CD4-positive, alpha-beta T cell (primary cell): ENCODE measurements at regions of chr17 and their contacts with region 1.

Region 1: GRCh38 chr17:28902819-28903545 is at the start of gene DHRS13:
- DNase-seq: peak; percentile 88 to 99 (median 95)
- ATAC-seq: peak; percentile 88
- H3K4me3 ChIP-seq: peak within 1 kb of the TSS; percentile 79
- H3K4me3 Mint-ChIP-seq: peak within 1 kb of the TSS; percentile 85
- H3K27ac ChIP-seq: peak within 1 kb of the TSS; percentile 71 to 76
- H3K27ac Mint-ChIP-seq: peak within 1 kb of the TSS; percentile 85
- H3K4me1 ChIP-seq: peaks cover 36% of the 10 kb centered on the region
- H3K4me1 Mint-ChIP-seq: peaks cover 35% of the 10 kb centered on the region
- H3K27me3 ChIP-seq: no peaks in the 10 kb centered on the region
- H3K27me3 Mint-ChIP-seq: no peaks in the 10 kb centered on the region
- CTCF ChIP-seq: peak; percentile 93
- total RNA-seq, gene DHRS13: 33.5 to 34.3 TPM

Region 2: DNA sequence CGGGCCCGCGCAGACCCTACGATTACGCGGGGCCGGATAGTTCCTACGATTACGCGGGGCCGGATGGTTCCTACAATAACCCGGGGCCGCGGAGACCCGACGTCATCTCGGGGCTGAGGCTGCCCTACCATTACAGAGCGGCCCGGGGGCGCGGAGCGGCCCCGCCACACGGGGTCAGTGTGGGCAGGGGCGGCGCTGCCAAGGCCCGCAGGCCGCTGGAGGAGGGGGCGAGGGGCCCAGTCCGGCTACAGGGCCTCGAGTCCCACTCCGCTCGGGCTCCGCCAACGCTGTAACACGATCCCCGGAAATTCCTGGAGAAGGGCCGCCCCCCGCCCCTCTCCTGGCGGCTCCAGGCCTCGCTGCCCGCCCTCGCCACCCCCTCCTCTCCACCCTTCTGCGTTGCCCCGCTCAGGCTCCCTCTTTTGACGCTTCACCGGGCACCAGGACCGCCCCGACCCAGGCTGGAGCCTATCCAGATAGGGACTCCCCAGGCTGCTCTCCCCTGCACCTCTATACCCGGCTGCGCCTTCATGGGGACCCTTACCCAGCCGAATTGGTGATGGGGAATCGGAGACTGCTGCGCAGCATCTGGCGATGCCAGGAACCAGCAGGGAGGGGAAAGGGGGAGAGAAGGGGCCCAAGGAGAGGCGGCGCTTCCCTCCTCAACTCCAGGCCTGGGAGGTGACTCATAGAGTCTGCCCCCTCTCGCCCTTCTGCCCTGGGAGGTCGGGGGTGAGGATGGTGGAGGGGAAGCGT is 185.2 kb before region 1 on chr17 and contains the start of gene RAB34:
- CTCF ChIA-PET with region 1: interaction called, 5 read pairs
- POLR2A ChIA-PET with region 1: interaction called, 9 read pairs
- intact Hi-C with region 1: loop called in 1 of 2 experiments (anchors 2 kb)
- DNase-seq: peak in 6 of 14 experiments; percentile 12 to 60 (median 43)
- ATAC-seq: no peak
- H3K4me3 ChIP-seq: peak within 1 kb of the TSS; percentile 36
- H3K4me3 Mint-ChIP-seq: peak within 1 kb of the TSS; percentile 79
- H3K27ac ChIP-seq: no peak within 1 kb of the TSS
- H3K27ac Mint-ChIP-seq: peak within 1 kb of the TSS; percentile 79
- H3K4me1 ChIP-seq: peaks cover 55% of the 10 kb centered on the region
- H3K4me1 Mint-ChIP-seq: peaks cover 41% of the 10 kb centered on the region
- H3K27me3 ChIP-seq: peaks cover 17 to 21% of the 10 kb centered on the region in 2 experiments
- H3K27me3 Mint-ChIP-seq: peaks cover 35% of the 10 kb centered on the region
- CTCF ChIP-seq: no peak
- total RNA-seq, gene RAB34: 20.7 to 21.3 TPM

Region 3: DNA sequence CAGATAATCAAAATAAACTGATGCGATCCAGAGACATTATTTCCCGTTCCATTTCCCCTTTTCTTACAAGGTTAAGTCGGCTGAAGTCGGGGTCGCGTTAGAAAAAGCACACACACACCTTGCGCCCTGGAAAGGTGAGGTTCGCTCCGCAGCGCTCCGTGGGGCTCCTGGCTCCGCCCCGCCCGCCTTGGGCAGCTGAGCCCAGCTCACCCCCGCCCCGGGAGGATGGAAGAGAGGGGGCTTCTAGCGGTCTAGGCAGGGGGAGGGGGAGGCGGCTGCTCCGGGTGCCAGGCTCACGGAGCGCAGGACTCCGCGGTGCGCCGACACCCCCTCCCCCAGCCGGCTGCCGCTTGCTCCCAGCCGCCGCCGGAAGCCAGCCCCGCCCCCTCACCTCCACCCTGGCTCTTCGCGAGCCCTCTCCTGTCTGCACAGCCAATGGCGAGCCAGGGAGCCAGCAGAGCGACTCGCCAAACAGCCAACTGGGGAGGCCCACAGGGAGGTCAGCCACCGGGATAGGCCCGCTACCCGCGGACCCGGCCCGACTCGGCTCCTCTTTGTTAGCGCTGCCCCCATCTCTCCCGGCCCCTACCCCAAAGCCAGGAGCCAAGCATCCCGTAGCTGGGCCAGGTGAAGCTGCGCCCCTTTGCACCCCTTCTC is 90.8 kb before region 1 on chr17:
- CTCF ChIA-PET with region 1: interaction called, 7 read pairs
- POLR2A ChIA-PET with region 1: interaction called, 5 read pairs
- intact Hi-C with region 1: loop called in 1 of 2 experiments (anchors 2 kb)
- DNase-seq: peak; percentile 91 to 98 (median 95)
- ATAC-seq: peak; percentile 95
- H3K4me3 ChIP-seq: peak overlapping the region; percentile 78
- H3K4me3 Mint-ChIP-seq: peak overlapping the region; percentile 92
- H3K27ac ChIP-seq: peak overlapping the region; percentile 91 to 93
- H3K27ac Mint-ChIP-seq: peak overlapping the region; percentile 90
- H3K4me1 ChIP-seq: peaks cover 15% of the 10 kb centered on the region
- H3K4me1 Mint-ChIP-seq: peaks cover 49% of the 10 kb centered on the region
- H3K27me3 ChIP-seq: no peaks in the 10 kb centered on the region
- H3K27me3 Mint-ChIP-seq: no peaks in the 10 kb centered on the region
- CTCF ChIP-seq: no peak

Region 4: DNA sequence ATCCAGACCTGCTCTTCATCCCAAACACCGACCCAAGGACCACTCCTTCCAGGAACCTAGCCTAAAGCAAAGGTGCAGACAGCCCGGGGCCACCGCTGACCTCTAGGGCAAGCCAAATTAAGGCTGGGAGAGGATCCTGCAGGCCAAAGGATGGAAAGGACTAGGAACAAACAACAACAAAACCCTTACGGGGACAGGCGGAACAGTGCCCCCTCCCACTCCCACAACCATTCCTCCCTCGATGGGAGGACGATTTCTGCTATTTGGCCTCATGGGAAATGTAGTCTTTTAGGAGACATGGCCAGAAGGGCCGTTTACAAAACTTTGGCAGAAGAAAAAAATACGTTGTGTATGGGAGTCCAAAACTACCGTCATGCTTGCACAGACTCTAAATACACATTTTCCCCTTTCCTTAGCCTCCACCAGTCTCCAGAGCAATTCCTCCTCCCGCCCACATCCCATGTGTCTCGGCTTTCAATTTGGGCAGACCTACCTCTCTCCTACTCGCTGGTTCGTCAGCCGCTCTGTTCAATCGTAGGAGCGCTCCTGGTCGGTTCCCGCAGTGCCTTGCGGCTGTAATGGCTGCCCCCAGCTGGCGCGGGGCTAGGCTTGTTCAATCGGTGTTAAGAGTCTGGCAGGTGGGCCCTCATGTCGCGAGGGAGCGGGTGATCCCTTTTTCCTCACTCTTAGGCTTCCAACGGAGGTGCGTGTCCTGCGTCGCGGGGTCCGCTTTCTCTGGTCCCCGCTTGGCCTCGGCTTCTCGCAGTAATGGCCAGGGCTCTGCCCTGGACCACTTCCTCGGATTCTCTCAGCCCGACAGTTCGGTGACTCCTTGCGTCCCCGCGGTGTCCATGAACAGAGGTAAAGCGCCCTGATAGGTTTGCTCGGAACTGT is 48.3 kb before region 1 on chr17 and contains the start of gene ERAL1:
- CTCF ChIA-PET with region 1: interaction called, 7 read pairs
- POLR2A ChIA-PET with region 1: interaction called, 6 read pairs
- intact Hi-C with region 1: loop called (anchors 2 kb)
- DNase-seq: peak; percentile 69 to 90 (median 76)
- ATAC-seq: peak; percentile 100
- H3K4me3 ChIP-seq: peak within 1 kb of the TSS; percentile 96
- H3K4me3 Mint-ChIP-seq: peak within 1 kb of the TSS; percentile 91
- H3K27ac ChIP-seq: peak within 1 kb of the TSS; percentile 70 to 72
- H3K27ac Mint-ChIP-seq: peak within 1 kb of the TSS; percentile 78
- H3K4me1 ChIP-seq: peaks cover 15% of the 10 kb centered on the region
- H3K4me1 Mint-ChIP-seq: peaks cover 18% of the 10 kb centered on the region
- H3K27me3 ChIP-seq: no peaks in the 10 kb centered on the region
- H3K27me3 Mint-ChIP-seq: no peaks in the 10 kb centered on the region
- CTCF ChIP-seq: no peak
- total RNA-seq, gene ERAL1: 15.6 to 16.8 TPM

Region 5: GRCh38 chr17:28892024-28892423 is 11.0 kb before region 1 on chr17:
- CTCF ChIA-PET with region 1: interaction called, 25 read pairs
- POLR2A ChIA-PET with region 1: interaction called, 14 read pairs
- intact Hi-C with region 1: no loop called
- DNase-seq: no peak
- ATAC-seq: no peak
- H3K4me3 ChIP-seq: no peak overlapping the region
- H3K4me3 Mint-ChIP-seq: peak overlapping the region; percentile 23
- H3K27ac ChIP-seq: peak overlapping the region in 1 of 2 donors; percentile 18
- H3K27ac Mint-ChIP-seq: peak overlapping the region; percentile 95
- H3K4me1 ChIP-seq: peaks cover 78% of the 10 kb centered on the region
- H3K4me1 Mint-ChIP-seq: peaks cover 50% of the 10 kb centered on the region
- H3K27me3 ChIP-seq: no peaks in the 10 kb centered on the region
- H3K27me3 Mint-ChIP-seq: no peaks in the 10 kb centered on the region
- CTCF ChIP-seq: no peak

Region 6: GRCh38 chr17:28916302-28916934 is 13.4 kb after region 1 on chr17:
- CTCF ChIA-PET with region 1: interaction called, 8 read pairs
- POLR2A ChIA-PET with region 1: interaction called, 4 read pairs
- intact Hi-C with region 1: loop called (anchors 1 kb)
- DNase-seq: peak in 12 of 14 experiments; percentile 22 to 72 (median 38)
- ATAC-seq: peak; percentile 86
- H3K4me3 ChIP-seq: no peak overlapping the region
- H3K4me3 Mint-ChIP-seq: no peak overlapping the region
- H3K27ac ChIP-seq: no peak overlapping the region
- H3K27ac Mint-ChIP-seq: peak overlapping the region; percentile 34
- H3K4me1 ChIP-seq: no peaks in the 10 kb centered on the region
- H3K4me1 Mint-ChIP-seq: peaks cover 8% of the 10 kb centered on the region
- H3K27me3 ChIP-seq: no peaks in the 10 kb centered on the region
- H3K27me3 Mint-ChIP-seq: no peaks in the 10 kb centered on the region
- CTCF ChIP-seq: peak; percentile 85

Region 7: DNA sequence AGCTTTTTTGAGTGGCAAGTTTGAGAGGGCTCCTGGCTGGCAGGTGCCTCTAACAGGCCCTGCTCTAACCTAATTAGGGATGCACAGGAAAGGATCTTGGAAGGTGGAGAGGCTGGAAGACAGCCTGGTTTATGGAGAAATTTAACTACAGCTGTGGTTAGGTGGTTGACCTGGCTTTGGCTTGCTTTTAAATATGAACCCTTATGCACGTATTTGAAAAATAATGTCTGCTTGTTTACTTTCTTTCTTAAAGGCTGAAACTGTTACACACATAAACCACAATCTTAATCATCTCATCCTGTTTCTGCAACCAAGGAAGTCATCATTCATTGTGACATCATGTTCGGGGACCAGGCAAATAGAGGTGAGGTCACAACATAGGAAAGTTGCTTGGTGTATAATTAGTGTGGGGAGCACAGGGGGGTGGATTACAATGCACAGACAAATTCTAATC is 23.0 kb after region 1 on chr17:
- CTCF ChIA-PET with region 1: interaction called, 20 read pairs
- POLR2A ChIA-PET with region 1: interaction called, 11 read pairs
- intact Hi-C with region 1: no loop called
- DNase-seq: peak in 12 of 14 experiments; percentile 20 to 95 (median 41)
- ATAC-seq: peak; percentile 91
- H3K4me3 ChIP-seq: peak overlapping the region; percentile 22
- H3K4me3 Mint-ChIP-seq: peak overlapping the region; percentile 43
- H3K27ac ChIP-seq: peak overlapping the region; percentile 91 to 92
- H3K27ac Mint-ChIP-seq: peak overlapping the region; percentile 98
- H3K4me1 ChIP-seq: peaks cover 52% of the 10 kb centered on the region
- H3K4me1 Mint-ChIP-seq: peaks cover 66% of the 10 kb centered on the region
- H3K27me3 ChIP-seq: no peaks in the 10 kb centered on the region
- H3K27me3 Mint-ChIP-seq: no peaks in the 10 kb centered on the region
- CTCF ChIP-seq: no peak

Region 8: DNA sequence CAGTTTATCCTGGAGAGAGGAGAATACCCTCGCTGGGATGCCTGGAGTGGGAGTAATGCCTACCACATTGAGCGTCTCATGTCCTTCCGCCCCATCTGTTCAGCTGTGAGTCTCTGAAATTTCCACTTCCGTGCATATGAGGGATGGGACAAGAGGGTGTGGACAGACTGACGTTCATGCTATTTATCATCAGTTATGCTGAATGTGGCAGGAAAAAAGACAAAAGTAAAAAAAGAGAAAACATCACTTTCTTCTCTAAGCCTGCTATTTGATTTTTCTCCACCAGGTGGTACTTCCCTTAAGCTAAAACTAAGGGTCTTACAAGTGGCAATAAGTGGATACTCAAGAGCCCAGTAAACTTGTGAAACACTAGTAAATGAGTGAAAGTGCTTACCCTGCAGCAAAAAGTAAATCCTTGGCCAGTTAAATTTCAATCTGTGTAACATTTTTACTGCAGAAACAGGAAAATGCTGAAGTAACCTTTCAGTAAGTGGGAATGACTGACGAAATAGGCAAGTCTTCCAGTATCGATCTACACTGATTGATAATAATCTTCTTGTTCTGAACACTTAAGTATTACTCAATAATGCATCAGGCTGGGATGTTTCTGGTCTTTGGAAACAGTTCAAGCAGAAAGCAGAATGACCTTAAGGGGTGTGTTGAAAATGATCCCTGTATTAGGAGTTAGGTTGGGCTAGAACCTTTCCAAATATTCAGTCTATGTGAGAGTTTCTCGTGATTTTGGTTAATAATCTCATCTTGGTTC is 349.3 kb after region 1 on chr17:
- CTCF ChIA-PET with region 1: no interaction called
- POLR2A ChIA-PET with region 1: no interaction called
- intact Hi-C with region 1: no loop called
- DNase-seq: peak in 2 of 14 experiments; percentile 40 to 42
- ATAC-seq: no peak
- H3K4me3 ChIP-seq: no peak overlapping the region
- H3K4me3 Mint-ChIP-seq: no peak overlapping the region
- H3K27ac ChIP-seq: no peak overlapping the region
- H3K27ac Mint-ChIP-seq: no peak overlapping the region
- H3K4me1 ChIP-seq: no peaks in the 10 kb centered on the region
- H3K4me1 Mint-ChIP-seq: peaks cover 6% of the 10 kb centered on the region
- H3K27me3 ChIP-seq: no peaks in the 10 kb centered on the region
- H3K27me3 Mint-ChIP-seq: no peaks in the 10 kb centered on the region
- CTCF ChIP-seq: peak; percentile 54